ENCODE measurements at regions of chr10 and their contacts with region 1.

Region 1: GRCh38 chr10:103416436-103417147 is 20.2 kb downstream of the PDCD11 start:
- DNase-seq: peak; percentile 20
- ATAC-seq: peak; percentile 47
- H3K4me3 Mint-ChIP-seq: no peak overlapping the region
- H3K27ac Mint-ChIP-seq: no peak overlapping the region
- H3K4me1 Mint-ChIP-seq: no peaks in the 10 kb centered on the region
- H3K27me3 Mint-ChIP-seq: no peaks in the 10 kb centered on the region
- CTCF ChIP-seq: peak; percentile 58

Region 2: DNA sequence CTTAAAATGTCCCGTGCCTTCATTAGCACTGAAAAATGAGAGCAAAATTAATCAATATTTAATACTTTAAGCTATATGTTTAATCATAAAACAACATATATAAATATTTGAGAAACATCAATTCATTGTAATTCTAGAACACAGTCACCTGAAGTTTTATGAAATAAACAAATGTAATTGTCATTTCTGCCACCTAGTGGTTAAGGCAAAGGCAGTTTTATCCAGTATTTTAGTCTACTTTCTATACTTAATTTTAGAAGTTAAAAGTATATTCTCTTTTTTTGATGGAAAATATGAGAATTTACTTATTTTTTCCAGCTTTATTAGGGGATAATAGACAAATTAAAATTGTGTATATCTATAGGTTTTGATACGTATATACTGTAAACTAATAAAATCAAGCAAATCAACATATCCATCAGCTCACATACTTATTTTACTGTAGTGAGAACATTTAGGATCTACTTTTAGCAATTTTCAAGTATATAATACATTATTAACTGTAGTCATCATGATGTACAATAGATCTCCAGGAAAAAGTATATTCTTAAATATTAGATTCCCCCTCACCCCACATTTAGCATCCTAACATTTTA is 82.6 kb before region 1 on chr10:
- CTCF ChIA-PET with region 1: no interaction called
- POLR2A ChIA-PET with region 1: no interaction called
- intact Hi-C with region 1: no loop called
- DNase-seq: no peak
- ATAC-seq: no peak
- H3K4me3 Mint-ChIP-seq: no peak overlapping the region
- H3K27ac Mint-ChIP-seq: no peak overlapping the region
- H3K4me1 Mint-ChIP-seq: no peaks in the 10 kb centered on the region
- H3K27me3 Mint-ChIP-seq: no peaks in the 10 kb centered on the region
- CTCF ChIP-seq: no peak

Region 3: GRCh38 chr10:103451831-103452505 is 35.4 kb after region 1 on chr10 and contains the start of gene CALHM2:
- CTCF ChIA-PET with region 1: interaction called, 3 read pairs
- POLR2A ChIA-PET with region 1: no interaction called
- intact Hi-C with region 1: loop called (anchors 5 kb)
- DNase-seq: peak; percentile 55
- ATAC-seq: peak; percentile 86
- H3K4me3 Mint-ChIP-seq: peak within 1 kb of the TSS; percentile 90
- H3K27ac Mint-ChIP-seq: peak within 1 kb of the TSS; percentile 85
- H3K4me1 Mint-ChIP-seq: peaks cover 46% of the 10 kb centered on the region
- H3K27me3 Mint-ChIP-seq: peaks cover 2% of the 10 kb centered on the region
- CTCF ChIP-seq: no peak
- total RNA-seq, gene CALHM2: 17.5 and 21.4 TPM in 2 replicates

Region 4: DNA sequence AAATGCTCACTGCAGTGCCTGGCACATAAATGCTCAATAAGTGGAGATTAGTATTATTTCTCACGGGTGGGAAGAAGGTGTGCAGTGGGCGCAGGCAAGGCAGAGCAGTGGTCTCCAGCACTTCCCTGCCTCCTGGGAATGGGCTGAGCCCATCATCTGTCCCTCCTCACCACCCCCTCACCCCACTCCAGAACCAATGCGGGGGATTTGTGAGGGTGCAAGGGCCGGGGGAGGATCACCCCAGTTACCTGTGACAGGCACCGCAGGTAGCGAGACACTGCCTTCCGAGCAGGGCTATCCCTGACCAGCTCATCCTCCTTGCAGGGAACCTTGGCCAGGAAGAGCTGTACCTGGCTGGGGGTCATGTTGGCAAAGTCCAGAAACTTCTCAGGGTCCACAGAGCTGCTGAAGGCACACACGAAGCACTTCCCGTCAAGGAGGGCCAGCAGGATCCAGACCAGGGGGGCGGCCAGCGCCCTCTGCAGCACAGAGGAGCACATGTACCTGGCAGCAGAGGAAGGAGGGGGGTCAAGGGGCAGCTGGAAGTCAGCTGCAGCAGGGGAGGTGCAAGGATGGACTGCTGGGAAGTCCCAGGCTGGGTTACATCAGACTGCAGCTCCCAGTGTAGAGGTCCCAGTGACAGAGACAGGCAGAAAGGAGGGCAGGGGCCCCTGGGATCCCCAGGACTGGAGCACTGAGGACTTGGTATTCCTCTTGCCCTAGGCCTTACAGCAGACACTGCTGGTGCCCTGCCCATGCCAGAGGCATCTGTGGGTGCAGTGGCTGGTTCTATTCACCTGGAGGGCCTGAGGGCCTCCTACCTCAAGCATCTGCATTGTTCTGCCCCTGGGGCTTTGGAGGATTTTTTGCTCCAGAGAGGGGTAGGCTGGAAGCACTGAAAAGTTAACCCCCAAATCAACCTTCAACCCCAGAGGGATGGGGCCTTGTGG is 59.7 kb after region 1 on chr10:
- CTCF ChIA-PET with region 1: interaction called, 28 read pairs
- POLR2A ChIA-PET with region 1: no interaction called
- intact Hi-C with region 1: no loop called
- DNase-seq: no peak
- ATAC-seq: no peak
- H3K4me3 Mint-ChIP-seq: no peak overlapping the region
- H3K27ac Mint-ChIP-seq: no peak overlapping the region
- H3K4me1 Mint-ChIP-seq: peaks cover 26% of the 10 kb centered on the region
- H3K27me3 Mint-ChIP-seq: no peaks in the 10 kb centered on the region
- CTCF ChIP-seq: no peak

Region 5: GRCh38 chr10:103481974-103482531 is 65.5 kb after region 1 on chr10:
- CTCF ChIA-PET with region 1: interaction called, 112 read pairs
- POLR2A ChIA-PET with region 1: interaction called, 4 read pairs
- intact Hi-C with region 1: loop called (anchors 1 kb)
- DNase-seq: no peak
- ATAC-seq: peak; percentile 78
- H3K4me3 Mint-ChIP-seq: no peak overlapping the region
- H3K27ac Mint-ChIP-seq: no peak overlapping the region
- H3K4me1 Mint-ChIP-seq: peaks cover 9% of the 10 kb centered on the region
- H3K27me3 Mint-ChIP-seq: no peaks in the 10 kb centered on the region
- CTCF ChIP-seq: peak; percentile 49

Region 6: GRCh38 chr10:103491493-103492381 is 75.1 kb after region 1 on chr10:
- CTCF ChIA-PET with region 1: interaction called, 112 read pairs
- POLR2A ChIA-PET with region 1: no interaction called
- intact Hi-C with region 1: no loop called
- DNase-seq: no peak
- ATAC-seq: no peak
- H3K4me3 Mint-ChIP-seq: no peak overlapping the region
- H3K27ac Mint-ChIP-seq: no peak overlapping the region
- H3K4me1 Mint-ChIP-seq: peaks cover 31% of the 10 kb centered on the region
- H3K27me3 Mint-ChIP-seq: peaks cover 24% of the 10 kb centered on the region
- CTCF ChIP-seq: no peak

Region 7: GRCh38 chr10:103592186-103593021 is 175.8 kb after region 1 on chr10:
- CTCF ChIA-PET with region 1: interaction called, 4 read pairs
- POLR2A ChIA-PET with region 1: no interaction called
- intact Hi-C with region 1: loop called (anchors 1 kb)
- DNase-seq: peak; percentile 29
- ATAC-seq: peak; percentile 88
- H3K4me3 Mint-ChIP-seq: no peak overlapping the region
- H3K27ac Mint-ChIP-seq: no peak overlapping the region
- H3K4me1 Mint-ChIP-seq: no peaks in the 10 kb centered on the region
- H3K27me3 Mint-ChIP-seq: no peaks in the 10 kb centered on the region
- CTCF ChIP-seq: no peak

Region 8: DNA sequence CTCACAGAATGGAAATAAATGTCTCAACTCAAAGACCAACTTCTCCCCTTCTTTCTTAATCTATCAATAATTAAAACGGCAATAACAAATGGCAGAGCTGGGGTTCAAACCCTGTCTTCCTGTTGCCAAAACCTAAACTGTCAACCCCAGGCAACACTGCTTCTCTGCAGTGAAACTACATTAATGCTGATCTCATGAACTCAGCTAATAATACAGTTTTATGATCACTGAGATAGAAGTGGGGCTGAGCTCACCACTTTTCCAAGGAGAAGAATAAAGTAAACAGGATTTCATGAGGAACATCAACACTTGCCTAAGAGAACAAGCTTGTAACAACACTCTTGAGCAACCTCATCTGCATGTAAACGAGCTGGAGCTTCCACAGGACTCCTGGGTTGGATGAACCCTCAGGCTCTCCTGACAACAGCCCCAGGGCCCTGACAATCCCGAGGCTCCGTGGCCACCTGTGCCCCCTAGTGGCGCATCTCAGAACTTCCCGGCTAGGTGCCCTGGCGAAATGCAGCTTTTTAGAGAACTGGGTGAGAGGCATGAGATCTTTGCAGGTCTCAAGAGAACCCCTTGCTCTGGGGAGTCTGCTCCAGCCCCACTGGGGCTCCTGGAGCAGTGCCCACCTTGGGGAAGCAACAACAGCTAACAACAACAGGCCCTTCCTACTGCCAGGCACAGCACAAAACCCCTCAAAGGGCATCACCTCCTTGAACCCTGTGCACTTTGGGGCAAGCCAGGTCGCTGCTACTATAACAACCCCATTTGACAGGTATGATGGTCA is 269.5 kb after region 1 on chr10:
- CTCF ChIA-PET with region 1: interaction called, 4 read pairs
- POLR2A ChIA-PET with region 1: no interaction called
- intact Hi-C with region 1: loop called (anchors 5 kb)
- DNase-seq: peak; percentile 71
- ATAC-seq: peak; percentile 96
- H3K4me3 Mint-ChIP-seq: no peak overlapping the region
- H3K27ac Mint-ChIP-seq: no peak overlapping the region
- H3K4me1 Mint-ChIP-seq: peaks cover 15% of the 10 kb centered on the region
- H3K27me3 Mint-ChIP-seq: no peaks in the 10 kb centered on the region
- CTCF ChIP-seq: peak; percentile 61

Measured in activated B cell treated with CpG ODN at 0.5 μM for 24 hours (primary cell).